ENCODE measurements at regions of chr10 and their contacts with region 1.

Region 1: GRCh38 chr10:104121520-104122224 is at the start of gene SFR1:
- DNase-seq: peak; percentile 71
- H3K4me3 ChIP-seq: peak within 1 kb of the TSS; percentile 86
- CTCF ChIP-seq: peak; percentile 81

Region 2: GRCh38 chr10:104020020-104020419 is 101.7 kb before region 1 on chr10:
- CTCF ChIA-PET with region 1: interaction called, 14 read pairs
- POLR2A ChIA-PET with region 1: interaction called, 3 read pairs
- DNase-seq: no peak
- H3K4me3 ChIP-seq: no peak overlapping the region
- CTCF ChIP-seq: no peak

Region 3: DNA sequence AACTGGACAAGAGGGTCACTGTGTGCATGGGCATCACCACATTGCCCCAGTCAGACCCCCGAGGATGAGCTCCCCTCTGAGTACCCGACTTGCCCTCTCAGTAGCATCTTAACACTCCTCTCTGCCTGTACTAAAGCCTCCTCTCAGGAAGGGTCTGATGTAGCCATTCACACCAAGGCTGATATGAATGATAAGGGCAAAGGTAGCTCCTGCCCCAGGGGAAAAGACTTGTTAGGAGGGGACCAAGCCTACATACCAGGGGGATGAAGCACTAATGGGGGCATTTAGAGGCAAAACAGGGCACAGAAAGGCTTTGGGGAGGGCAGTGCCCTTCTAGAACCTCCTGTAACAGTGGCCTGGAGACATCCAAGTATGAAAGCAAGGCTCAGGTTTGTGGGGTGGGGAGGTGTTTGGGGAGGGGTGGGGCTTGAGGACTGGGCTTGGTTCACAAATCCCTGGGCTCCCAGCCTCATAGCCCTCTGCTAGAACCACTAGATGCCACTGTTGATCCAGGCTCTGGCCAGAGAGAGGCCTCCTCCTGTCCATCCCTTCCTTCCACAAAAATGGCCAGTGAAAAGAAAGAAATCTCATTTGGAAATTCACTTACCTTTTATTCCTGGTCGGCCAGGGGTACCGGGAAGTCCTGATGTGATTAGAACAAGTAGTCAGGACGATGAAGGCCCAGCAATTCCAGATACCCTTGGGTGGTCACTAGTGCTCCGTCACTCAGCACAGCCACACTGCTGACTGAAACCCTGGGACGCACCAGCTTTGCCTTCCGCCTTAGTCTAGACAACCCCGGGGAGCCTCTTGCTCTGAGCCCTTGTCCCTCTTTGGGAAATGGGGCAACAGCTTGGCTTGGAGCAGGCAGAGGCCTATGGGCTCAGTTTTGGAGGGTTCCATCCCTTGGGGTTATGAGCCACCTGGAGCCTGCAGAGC is 76.3 kb before region 1 on chr10:
- CTCF ChIA-PET with region 1: interaction called, 148 read pairs
- POLR2A ChIA-PET with region 1: interaction called, 4 read pairs
- DNase-seq: no peak
- H3K4me3 ChIP-seq: no peak overlapping the region
- CTCF ChIP-seq: peak; percentile 79

Region 4: GRCh38 chr10:104099274-104099673 is 22.4 kb before region 1 on chr10:
- CTCF ChIA-PET with region 1: interaction called, 13 read pairs
- POLR2A ChIA-PET with region 1: interaction called, 6 read pairs
- DNase-seq: no peak
- H3K4me3 ChIP-seq: no peak overlapping the region
- CTCF ChIP-seq: no peak

Region 5: DNA sequence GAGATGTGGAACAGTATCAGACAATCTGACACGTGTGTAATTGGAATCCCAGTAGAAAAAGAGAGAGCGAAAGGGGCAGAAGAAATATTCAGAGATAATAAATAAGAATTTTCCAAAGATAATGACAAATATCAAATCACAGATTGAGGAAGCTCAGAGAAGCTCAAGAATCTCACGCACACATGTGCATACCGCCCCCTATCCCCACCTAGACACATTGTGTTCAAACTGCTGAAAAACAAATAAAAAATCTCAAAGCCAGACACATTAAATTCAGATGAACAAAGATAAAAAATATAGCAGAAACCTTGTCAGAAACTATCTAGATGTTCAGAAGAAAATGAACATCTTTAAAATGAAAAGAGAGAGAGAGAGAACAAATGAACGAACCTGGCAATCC is 17.5 kb after region 1 on chr10:
- CTCF ChIA-PET with region 1: interaction called, 15 read pairs
- POLR2A ChIA-PET with region 1: no interaction called
- DNase-seq: no peak
- H3K4me3 ChIP-seq: no peak overlapping the region
- CTCF ChIP-seq: peak; percentile 16

Region 6: DNA sequence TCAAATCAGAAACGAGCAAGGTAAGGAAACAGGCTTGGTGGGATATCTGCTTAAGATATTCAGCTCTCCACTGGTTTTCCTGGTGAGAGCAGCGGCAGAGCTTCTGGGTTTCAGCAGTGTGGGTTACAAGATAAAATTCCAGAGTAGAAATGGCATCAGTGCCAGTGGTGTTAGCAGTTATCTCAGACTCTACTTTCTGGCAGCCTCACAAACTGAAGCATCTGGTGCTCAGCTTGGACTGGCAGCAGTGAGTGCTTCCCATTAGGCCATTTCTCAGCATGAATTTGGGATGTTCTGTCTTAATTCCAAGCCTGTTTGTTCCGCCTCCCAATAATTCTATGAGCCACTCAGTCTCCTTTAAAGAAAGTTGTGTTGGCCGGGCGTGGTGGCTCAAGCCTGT is 140.4 kb after region 1 on chr10:
- CTCF ChIA-PET with region 1: no interaction called
- POLR2A ChIA-PET with region 1: no interaction called
- DNase-seq: no peak
- H3K4me3 ChIP-seq: no peak overlapping the region
- CTCF ChIP-seq: no peak

Region 7: DNA sequence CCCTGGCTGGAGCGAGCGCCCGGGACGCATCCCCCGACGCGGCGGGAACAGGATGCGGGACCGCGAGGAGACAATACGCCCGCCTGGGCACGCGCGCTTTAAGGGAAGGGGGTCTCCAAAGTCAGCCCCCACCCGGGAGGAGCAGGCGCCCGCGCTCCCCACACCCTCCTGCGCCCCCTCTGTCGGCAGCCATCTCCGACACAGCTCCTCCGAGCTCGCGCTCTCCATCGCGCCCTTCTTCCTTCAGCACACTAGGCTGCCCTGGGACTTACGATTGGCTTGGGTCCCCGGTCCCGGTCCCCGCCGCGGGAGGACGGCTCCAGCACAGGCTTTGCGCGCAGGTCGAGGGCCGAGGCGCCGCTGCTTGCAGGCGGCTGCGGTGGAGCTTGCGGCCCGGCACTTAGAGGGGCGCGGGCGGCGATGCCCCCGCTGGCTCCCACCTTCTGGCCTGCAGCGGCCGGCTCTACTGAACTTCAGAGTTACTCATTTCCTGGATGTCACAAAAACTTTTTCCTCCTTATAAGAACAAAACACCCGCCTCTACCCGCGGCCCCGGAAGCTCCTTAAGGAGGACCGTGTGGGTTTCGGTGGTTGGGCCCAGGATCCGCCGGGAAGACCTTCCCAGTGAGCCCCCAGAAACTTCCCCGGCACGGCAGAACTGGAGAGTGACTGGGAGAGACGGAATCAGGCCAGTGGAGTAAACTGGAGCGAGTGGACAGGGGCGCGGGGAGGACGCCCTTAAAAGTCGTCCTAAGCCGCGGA is 216.5 kb after region 1 on chr10 and contains the start of gene ITPRIP:
- CTCF ChIA-PET with region 1: no interaction called
- POLR2A ChIA-PET with region 1: no interaction called
- DNase-seq: no peak
- H3K4me3 ChIP-seq: peak within 1 kb of the TSS; percentile 85
- CTCF ChIP-seq: peak; percentile 28

Measured in AG04449 (cell line).